Naive thymus-derived CD4-positive, alpha-beta T cell (primary cell): ENCODE measurements at regions of chr14 and their contacts with region 1.

Region 1: DNA sequence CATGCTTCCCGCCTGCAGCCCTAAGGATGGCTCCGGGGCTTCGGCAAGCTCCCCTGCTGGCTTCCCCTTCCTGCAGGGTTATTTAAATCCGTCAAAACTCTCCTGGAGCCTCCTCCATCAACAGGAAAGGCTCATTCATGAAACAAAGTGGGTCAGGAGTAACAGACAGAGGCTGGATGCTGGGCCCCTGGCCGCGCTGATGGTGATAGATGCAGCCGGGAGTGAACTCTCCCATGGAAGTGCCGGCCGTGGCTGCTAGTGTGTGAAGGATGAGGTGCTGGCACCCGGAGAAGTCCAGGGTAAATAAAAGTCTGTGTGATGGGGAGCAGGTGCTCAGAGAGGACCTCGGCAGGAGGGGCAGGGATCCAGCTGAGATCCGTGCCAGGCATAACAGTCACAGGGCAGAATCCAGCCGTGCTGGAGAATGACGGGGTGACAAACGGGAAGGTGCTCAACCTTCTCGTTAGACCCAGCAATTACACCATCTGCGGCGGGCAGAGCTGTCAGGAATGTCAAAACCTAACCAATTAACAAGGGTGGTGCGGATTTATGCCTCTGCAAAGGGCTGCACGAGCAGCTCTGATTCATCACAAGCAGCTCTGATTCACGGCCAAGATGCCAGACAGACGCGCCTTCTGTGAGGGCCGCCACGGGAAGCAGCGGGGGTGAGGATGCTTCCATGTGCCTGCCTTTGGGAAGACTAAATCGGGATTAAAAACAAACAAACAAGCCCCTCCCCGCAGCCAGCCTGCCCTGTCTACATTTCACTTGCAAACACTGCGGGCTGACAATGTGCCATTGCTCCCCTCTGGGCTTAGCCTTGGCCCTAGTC is 55.6 kb downstream of the SYNE3 start:
- DNase-seq: no peak
- ATAC-seq: no peak
- H3K4me3 ChIP-seq: no peak overlapping the region
- H3K4me3 Mint-ChIP-seq: peak overlapping the region in 6 of 10 donors; percentile 25 to 86 (median 34)
- H3K27ac ChIP-seq: peak overlapping the region; percentile 85
- H3K27ac Mint-ChIP-seq: peak overlapping the region in 8 of 9 donors; percentile 95 to 100 (median 99)
- H3K4me1 ChIP-seq: peaks cover 43 to 50% of the 10 kb centered on the region in 2 donors
- H3K4me1 Mint-ChIP-seq: peaks cover 38 to 77% (median 70%) of the 10 kb centered on the region in 7 donors
- H3K27me3 ChIP-seq: no peaks in the 10 kb centered on the region
- H3K27me3 Mint-ChIP-seq: no peaks in the 10 kb centered on the region

Region 2: GRCh38 chr14:95395098-95395737 is 65.6 kb before region 1 on chr14:
- CTCF ChIA-PET with region 1: no interaction called
- POLR2A ChIA-PET with region 1: no interaction called
- intact Hi-C with region 1: no loop called
- DNase-seq: no peak
- ATAC-seq: no peak
- H3K4me3 ChIP-seq: no peak overlapping the region
- H3K4me3 Mint-ChIP-seq: no peak overlapping the region
- H3K27ac ChIP-seq: no peak overlapping the region
- H3K27ac Mint-ChIP-seq: no peak overlapping the region
- H3K4me1 ChIP-seq: no peaks in the 10 kb centered on the region
- H3K4me1 Mint-ChIP-seq: peaks cover 0 to 2% (median 0%) of the 10 kb centered on the region in 7 donors
- H3K27me3 ChIP-seq: no peaks in the 10 kb centered on the region
- H3K27me3 Mint-ChIP-seq: peaks cover 0 to 4% (median 0%) of the 10 kb centered on the region in 5 donors

Region 3: GRCh38 chr14:95442633-95443021 is 18.2 kb before region 1 on chr14:
- CTCF ChIA-PET with region 1: interaction called, 80 read pairs
- POLR2A ChIA-PET with region 1: interaction called, 22 read pairs
- intact Hi-C with region 1: loop called in 1 of 2 experiments (anchors 1 kb)
- DNase-seq: peak; percentile 51 to 76 (median 68)
- ATAC-seq: peak; percentile 94
- H3K4me3 ChIP-seq: no peak overlapping the region
- H3K4me3 Mint-ChIP-seq: no peak overlapping the region
- H3K27ac ChIP-seq: no peak overlapping the region
- H3K27ac Mint-ChIP-seq: peak overlapping the region; percentile 3 to 77 (median 57)
- H3K4me1 ChIP-seq: no peaks in the 10 kb centered on the region
- H3K4me1 Mint-ChIP-seq: peaks cover 4 to 15% (median 5%) of the 10 kb centered on the region in 7 donors
- H3K27me3 ChIP-seq: no peaks in the 10 kb centered on the region
- H3K27me3 Mint-ChIP-seq: no peaks in the 10 kb centered on the region

Region 4: GRCh38 chr14:95483309-95484165 is 22.7 kb after region 1 on chr14:
- CTCF ChIA-PET with region 1: interaction called, 3 read pairs
- POLR2A ChIA-PET with region 1: interaction called, 14 read pairs
- intact Hi-C with region 1: no loop called
- DNase-seq: no peak
- ATAC-seq: no peak
- H3K4me3 ChIP-seq: no peak overlapping the region
- H3K4me3 Mint-ChIP-seq: no peak overlapping the region
- H3K27ac ChIP-seq: no peak overlapping the region
- H3K27ac Mint-ChIP-seq: peak overlapping the region; percentile 3 to 79 (median 60)
- H3K4me1 ChIP-seq: peaks cover under 1 to 19% of the 10 kb centered on the region in 2 donors
- H3K4me1 Mint-ChIP-seq: peaks cover 47 to 63% (median 55%) of the 10 kb centered on the region in 7 donors
- H3K27me3 ChIP-seq: no peaks in the 10 kb centered on the region
- H3K27me3 Mint-ChIP-seq: no peaks in the 10 kb centered on the region

Region 5: DNA sequence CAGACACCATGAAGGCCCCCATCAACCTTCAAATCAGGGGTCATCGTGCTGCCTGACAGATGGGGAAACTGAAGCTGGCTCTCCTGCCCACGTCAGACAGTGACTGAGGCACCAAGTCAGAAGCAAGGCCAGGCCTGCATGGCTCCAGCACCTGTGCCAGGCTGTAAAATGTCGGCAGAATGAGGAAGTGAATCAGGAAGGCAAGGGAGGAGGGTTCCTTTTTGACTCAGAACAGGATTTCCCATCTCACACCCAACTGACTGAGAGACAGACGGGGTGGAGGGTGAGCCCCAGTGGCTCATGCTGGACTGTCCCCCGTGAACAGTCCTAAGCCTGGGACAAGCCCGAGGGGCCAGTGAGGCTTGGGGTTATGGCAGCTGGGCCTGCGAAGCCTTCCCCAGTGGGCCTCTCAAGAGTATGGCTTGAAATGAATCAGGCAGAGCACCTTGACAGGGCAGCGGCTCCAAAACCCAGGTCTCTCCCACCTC is 34.7 kb after region 1 on chr14:
- CTCF ChIA-PET with region 1: interaction called, 3 read pairs
- POLR2A ChIA-PET with region 1: interaction called, 3 read pairs
- intact Hi-C with region 1: loop called in 1 of 2 experiments (anchors 2 kb)
- DNase-seq: no peak
- ATAC-seq: peak; percentile 81
- H3K4me3 ChIP-seq: peak overlapping the region; percentile 5
- H3K4me3 Mint-ChIP-seq: peak overlapping the region in 7 of 10 donors; percentile 33 to 55 (median 46)
- H3K27ac ChIP-seq: peak overlapping the region; percentile 39
- H3K27ac Mint-ChIP-seq: peak overlapping the region; percentile 72 to 90 (median 84)
- H3K4me1 ChIP-seq: peaks cover 18 to 22% of the 10 kb centered on the region in 2 donors
- H3K4me1 Mint-ChIP-seq: peaks cover 54 to 72% (median 66%) of the 10 kb centered on the region in 7 donors
- H3K27me3 ChIP-seq: no peaks in the 10 kb centered on the region
- H3K27me3 Mint-ChIP-seq: no peaks in the 10 kb centered on the region